Right cardiac atrium (tissue), 5 donors: ENCODE measurements at regions of chr9 and their contacts with region 1.

Region 1: GRCh38 chr9:35060548-35061207 is 11.7 kb downstream of the VCP start:
- DNase-seq: no peak
- ATAC-seq: no peak
- H3K4me3 ChIP-seq: no peak overlapping the region
- H3K27ac ChIP-seq: no peak overlapping the region
- H3K4me1 ChIP-seq: no peaks in the 10 kb centered on the region
- H3K27me3 ChIP-seq: no peaks in the 10 kb centered on the region

Region 2: GRCh38 chr9:34796924-34797323 is 263.8 kb before region 1 on chr9:
- intact Hi-C with region 1: no loop called
- DNase-seq: no peak
- ATAC-seq: no peak
- H3K4me3 ChIP-seq: no peak overlapping the region
- H3K27ac ChIP-seq: no peak overlapping the region
- H3K4me1 ChIP-seq: no peaks in the 10 kb centered on the region
- H3K27me3 ChIP-seq: no peaks in the 10 kb centered on the region

Region 3: DNA sequence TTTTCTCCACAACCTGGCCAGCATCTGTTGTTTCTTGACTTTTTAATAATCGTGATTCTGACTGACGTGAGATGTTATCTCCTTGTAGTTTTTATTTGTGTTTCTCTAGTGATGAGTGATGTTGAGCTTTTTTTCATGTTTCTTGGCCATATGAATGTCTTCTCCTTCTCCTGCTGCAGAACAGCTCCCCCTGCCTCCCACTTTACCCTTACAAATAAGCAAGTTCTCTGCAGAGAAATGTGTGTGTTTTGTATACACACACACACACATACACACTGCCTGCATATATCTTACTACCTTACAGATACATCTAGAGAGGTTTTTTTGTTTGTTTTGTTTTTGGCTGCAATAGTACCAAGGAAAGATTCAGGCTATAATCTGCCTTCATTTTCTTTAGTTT is 191.3 kb before region 1 on chr9:
- intact Hi-C with region 1: no loop called
- DNase-seq: peak in 2 of 3 donors; percentile 16 to 39
- ATAC-seq: no peak
- H3K4me3 ChIP-seq: no peak overlapping the region
- H3K27ac ChIP-seq: no peak overlapping the region
- H3K4me1 ChIP-seq: no peaks in the 10 kb centered on the region
- H3K27me3 ChIP-seq: no peaks in the 10 kb centered on the region

Region 4: DNA sequence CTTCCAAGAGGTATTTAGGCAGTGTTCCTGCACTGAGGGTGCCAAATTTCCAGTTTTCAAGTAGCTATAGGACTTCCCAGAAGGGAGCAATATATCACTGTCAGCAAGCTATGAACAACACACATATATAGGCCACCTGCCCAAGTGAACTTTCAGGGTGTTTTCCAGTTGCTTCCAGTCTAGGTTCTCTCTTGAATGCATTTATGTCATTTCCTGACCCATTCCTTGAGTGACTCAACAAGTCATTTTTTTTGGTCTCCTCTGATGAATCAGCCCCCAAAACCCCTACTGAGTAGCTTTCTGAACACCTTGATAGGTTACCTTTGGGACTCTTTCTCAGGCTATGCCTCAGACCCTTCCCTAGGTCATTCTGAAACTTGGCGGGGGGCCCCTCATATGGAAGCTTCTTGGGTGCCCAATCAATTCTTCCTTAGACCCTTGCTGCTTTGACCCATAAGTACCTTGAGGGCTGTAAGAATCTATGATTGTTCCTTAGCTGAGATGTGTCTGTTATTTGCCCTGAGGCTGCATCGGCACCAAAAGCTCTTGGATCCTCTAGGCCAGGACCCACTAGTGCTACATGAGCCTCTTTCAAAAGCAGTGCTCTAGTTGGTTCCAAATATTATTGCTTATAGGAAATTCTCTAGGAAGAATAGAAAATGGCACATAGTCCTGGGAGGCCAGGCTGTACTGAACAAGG is 58.7 kb before region 1 on chr9:
- intact Hi-C with region 1: loop called in 1 of 4 experiments (anchors 10 kb)
- DNase-seq: no peak
- ATAC-seq: no peak
- H3K4me3 ChIP-seq: no peak overlapping the region
- H3K27ac ChIP-seq: no peak overlapping the region
- H3K4me1 ChIP-seq: peaks cover 2% of the 10 kb centered on the region
- H3K27me3 ChIP-seq: no peaks in the 10 kb centered on the region

Region 5: DNA sequence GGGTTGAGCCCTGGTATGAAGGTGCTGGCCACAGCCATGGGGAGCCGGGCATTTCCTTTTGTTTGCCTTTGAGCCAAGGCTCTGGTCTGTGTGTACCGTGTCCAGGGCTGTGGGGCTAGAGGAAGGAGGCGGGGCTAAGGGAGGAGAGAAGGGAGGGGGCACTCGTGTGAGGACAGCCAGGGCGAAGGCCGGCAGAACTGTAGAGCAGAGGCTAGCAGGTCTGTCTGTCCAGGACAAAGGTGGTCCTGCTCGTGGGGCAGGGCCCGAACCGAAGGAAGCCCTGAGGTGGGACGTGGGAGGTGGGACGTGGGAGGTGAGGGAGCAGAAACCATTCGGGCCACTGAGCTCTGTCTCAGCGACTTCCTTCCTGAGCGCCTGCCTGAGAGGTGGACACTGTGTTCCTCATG is 503.1 kb after region 1 on chr9:
- intact Hi-C with region 1: no loop called
- DNase-seq: peak; percentile 65 to 80 (median 78)
- ATAC-seq: peak; percentile 73 to 79
- H3K4me3 ChIP-seq: no peak overlapping the region
- H3K27ac ChIP-seq: peak overlapping the region; percentile 55
- H3K4me1 ChIP-seq: peaks cover 13% of the 10 kb centered on the region
- H3K27me3 ChIP-seq: no peaks in the 10 kb centered on the region